Naive thymus-derived CD8-positive, alpha-beta T cell (primary cell): ENCODE measurements at regions of chr11 and their contacts with region 1.

Region 1: DNA sequence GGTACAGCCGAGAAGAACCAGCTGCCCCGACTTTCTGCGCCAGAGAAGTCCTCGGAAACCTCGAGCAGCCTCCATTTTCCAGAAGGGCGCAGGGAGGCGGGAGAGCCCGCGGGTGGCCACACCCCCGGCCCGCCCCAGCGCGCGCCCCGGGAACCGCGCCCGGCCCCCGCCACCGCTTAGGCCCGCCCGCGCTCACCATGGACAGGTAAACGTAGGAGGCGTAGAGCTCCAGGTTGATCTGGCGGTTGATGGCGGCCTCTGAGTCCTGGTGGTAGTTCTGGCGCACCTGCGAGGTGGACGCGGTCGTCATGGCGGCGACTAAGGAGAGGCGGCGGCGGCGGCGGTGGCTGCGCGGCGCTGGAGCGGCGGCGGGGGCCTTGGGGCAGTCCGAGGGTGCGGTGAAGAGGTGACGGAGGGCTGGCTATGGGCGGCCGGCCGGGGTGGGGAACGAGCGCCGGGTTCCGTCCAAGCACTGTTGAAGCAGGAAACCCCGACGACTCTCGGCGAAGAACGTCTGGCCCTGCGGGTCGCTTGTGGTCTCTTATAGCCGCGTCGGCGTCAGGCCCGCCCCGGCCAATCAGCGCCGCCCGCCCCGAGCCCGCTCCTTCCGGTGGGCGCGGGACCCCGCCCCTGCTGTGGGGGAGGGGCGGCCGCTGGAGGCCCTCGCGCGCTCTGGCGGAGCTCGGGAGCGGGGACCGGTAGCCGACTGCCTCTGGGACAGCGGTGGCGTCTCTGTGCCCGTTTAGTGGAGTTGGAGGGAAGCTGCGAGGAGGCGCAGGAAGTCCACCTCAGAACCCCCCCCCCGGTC is at the start of gene FTH1:
- DNase-seq: peak; percentile 84 to 95 (median 90)
- ATAC-seq: peak; percentile 75 to 76
- H3K4me3 Mint-ChIP-seq: peak within 1 kb of the TSS; percentile 89 to 98 (median 95)
- H3K27ac Mint-ChIP-seq: peak within 1 kb of the TSS; percentile 84 to 99 (median 98)
- H3K4me1 Mint-ChIP-seq: peaks cover 39 to 76% (median 64%) of the 10 kb centered on the region in 4 donors
- H3K27me3 Mint-ChIP-seq: no peaks in the 10 kb centered on the region
- polyA plus RNA-seq, gene FTH1: 1,933 to 2,491 (median 2,221) TPM

Region 2: DNA sequence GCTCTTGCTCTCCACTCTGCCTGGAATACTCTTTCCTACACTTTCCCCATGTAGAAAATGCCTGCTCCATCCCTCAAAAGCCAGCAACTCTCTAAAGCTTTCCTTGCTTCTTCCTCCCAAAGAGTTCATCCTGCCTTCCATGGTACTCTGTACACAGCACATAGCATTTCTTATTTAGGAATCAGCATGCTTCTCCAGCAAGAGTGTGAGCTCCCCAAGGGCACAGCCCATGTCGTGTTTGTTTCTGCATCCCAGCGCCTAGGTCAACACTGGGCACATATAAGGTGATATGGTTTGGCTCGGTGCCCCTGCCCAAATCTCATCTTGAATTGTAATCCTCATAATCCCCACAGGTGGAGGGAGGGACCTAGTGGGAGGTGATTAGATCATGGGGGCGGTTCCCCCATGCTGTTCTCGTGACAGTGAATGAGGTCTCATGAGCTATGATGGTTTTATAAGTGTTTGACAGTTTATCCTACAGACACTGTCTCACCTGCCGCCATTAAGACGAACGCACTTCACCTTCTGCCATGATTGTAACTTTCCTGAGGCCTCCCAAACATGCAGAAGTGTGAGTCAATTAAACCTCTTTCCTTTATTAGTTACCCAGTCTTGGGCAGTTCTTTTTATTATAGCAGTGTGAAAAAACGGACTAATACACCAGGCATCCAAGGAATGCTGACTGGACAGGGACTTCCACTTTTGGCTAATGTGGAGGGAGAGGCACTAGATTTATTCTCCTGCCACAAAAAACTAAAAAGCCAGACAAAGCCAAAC is 814.3 kb before region 1 on chr11:
- POLR2A ChIA-PET with region 1: no interaction called
- DNase-seq: no peak
- ATAC-seq: no peak
- H3K4me3 Mint-ChIP-seq: no peak overlapping the region
- H3K27ac Mint-ChIP-seq: no peak overlapping the region
- H3K4me1 Mint-ChIP-seq: peaks cover 14 to 27% (median 22%) of the 10 kb centered on the region in 4 donors
- H3K27me3 Mint-ChIP-seq: no peaks in the 10 kb centered on the region

Region 3: DNA sequence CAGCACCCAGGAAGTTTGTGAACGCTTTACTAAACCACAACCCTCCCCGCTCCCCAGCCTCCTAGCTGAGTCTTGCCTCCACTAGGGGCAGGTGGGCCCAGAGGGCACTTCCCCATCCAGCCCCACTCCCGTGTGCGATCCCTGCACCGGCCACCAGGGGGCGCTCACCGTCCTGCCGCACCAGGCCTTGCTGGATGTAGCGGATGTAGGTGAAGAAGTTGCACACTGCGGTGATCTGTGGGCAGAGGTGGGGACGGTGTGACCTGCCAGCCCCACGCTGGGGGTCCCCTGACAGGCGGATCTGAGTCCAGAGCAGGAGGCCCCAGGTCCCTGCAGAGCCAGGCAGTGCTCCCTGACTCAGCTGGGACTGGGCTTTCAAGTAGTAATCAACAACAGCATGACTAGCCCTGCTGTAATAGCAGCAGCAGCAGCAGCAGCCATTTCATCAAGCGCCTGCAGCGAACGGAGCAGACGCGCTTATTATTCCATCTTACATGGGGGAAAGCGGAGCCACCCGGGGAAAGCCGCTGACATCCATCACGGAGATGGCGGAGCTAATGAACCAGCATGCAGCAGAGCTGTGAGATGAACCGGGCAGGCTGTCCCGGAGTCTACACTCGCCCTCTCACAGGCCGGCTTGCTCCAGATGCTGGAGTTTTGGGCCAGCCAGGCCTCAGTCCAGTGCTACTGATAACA is 68.0 kb before region 1 on chr11:
- POLR2A ChIA-PET with region 1: interaction called, 10 read pairs
- DNase-seq: peak; percentile 84 to 97 (median 93)
- ATAC-seq: peak; percentile 95 to 96
- H3K4me3 Mint-ChIP-seq: peak overlapping the region in 1 of 10 donors; percentile 22
- H3K27ac Mint-ChIP-seq: peak overlapping the region; percentile 6 to 94 (median 70)
- H3K4me1 Mint-ChIP-seq: peaks cover 4 to 11% (median 6%) of the 10 kb centered on the region in 4 donors
- H3K27me3 Mint-ChIP-seq: peaks cover 0 to 13% (median 4%) of the 10 kb centered on the region in 5 donors

Region 4: GRCh38 chr11:61947486-61948210 is 19.7 kb before region 1 on chr11:
- POLR2A ChIA-PET with region 1: interaction called, 13 read pairs
- DNase-seq: peak in 9 of 10 donors; percentile 35 to 75 (median 56)
- ATAC-seq: peak; percentile 78 to 89
- H3K4me3 Mint-ChIP-seq: no peak overlapping the region
- H3K27ac Mint-ChIP-seq: peak overlapping the region in 4 of 10 donors; percentile 16 to 62 (median 36)
- H3K4me1 Mint-ChIP-seq: peaks cover 0 to 4% (median 0%) of the 10 kb centered on the region in 4 donors
- H3K27me3 Mint-ChIP-seq: peaks cover 0 to 11% (median 4%) of the 10 kb centered on the region in 5 donors

Region 5: DNA sequence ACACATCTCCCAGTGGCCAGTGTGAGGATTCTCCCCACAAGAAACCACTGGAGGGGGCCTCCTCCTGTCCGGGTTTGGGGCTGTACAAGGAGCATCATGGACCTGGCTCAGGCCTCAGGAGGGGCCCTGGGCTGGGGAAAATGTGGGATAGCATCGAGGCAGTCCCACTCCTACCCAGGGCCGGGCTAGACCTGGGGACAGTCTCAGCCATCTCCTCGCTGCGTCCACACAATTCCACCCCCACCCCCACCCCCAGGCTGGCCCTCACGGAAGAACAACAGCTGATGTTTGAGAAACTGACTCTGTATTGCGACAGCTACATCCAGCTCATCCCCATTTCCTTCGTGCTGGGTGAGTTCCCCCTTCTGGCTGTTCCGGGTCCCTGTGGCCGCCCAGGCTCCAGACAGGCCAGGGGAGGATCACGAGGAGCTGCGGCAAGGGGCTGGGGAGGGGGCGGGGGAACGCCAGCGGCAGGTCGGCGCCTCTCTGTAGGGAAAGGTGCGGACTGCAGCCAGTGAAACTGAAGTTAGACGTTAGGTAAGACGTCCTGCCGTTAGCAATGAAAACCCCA is 12.4 kb before region 1 on chr11:
- POLR2A ChIA-PET with region 1: interaction called, 11 read pairs
- DNase-seq: peak in 2 of 10 donors; percentile 15 to 18
- ATAC-seq: peak; percentile 30 to 44
- H3K4me3 Mint-ChIP-seq: peak overlapping the region in 8 of 10 donors; percentile 10 to 71 (median 61)
- H3K27ac Mint-ChIP-seq: peak overlapping the region in 4 of 10 donors; percentile 19 to 71 (median 44)
- H3K4me1 Mint-ChIP-seq: peaks cover 0 to 10% (median 7%) of the 10 kb centered on the region in 4 donors
- H3K27me3 Mint-ChIP-seq: peaks cover 3 to 29% (median 11%) of the 10 kb centered on the region in 5 donors

Region 6: GRCh38 chr11:62004473-62004872 is 37.2 kb after region 1 on chr11:
- POLR2A ChIA-PET with region 1: no interaction called
- DNase-seq: no peak
- ATAC-seq: no peak
- H3K4me3 Mint-ChIP-seq: no peak overlapping the region
- H3K27ac Mint-ChIP-seq: peak overlapping the region in 1 of 10 donors; percentile 65
- H3K4me1 Mint-ChIP-seq: no peaks in the 10 kb centered on the region
- H3K27me3 Mint-ChIP-seq: peaks cover 0 to 4% (median 2%) of the 10 kb centered on the region in 5 donors

Region 7: DNA sequence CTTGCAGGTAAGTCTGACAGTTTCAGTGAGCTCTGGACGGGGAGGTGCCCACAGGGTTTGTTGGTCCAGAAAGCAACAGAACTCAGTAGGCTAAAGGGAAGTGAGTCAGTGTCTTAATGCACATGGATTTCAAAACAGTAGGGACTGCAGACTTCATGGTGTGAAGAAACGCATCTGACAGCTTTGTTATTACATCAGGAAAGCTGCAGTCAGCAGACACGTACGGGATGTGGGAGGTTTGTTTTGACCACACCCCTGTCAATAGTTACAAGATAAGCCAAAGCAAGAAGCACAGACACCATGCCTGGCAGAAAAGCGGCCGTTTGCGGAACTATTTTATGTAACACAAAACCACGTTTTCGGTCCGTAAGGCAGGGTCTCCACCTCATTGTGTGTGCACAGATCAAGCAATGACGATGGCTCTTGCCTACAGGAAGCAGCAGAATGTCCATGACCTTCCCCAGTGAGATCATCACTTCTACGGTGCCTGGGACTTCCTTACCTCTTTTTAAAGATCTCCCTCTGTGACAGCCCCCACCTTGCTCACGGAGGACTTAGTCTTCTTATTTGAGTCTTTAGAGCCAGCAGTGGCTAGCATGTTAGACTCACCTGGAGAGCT is 58.3 kb after region 1 on chr11:
- POLR2A ChIA-PET with region 1: interaction called, 46 read pairs
- DNase-seq: peak; percentile 57 to 94 (median 88)
- ATAC-seq: peak; percentile 85 to 90
- H3K4me3 Mint-ChIP-seq: peak overlapping the region; percentile 56 to 81 (median 75)
- H3K27ac Mint-ChIP-seq: peak overlapping the region; percentile 92 to 99 (median 98)
- H3K4me1 Mint-ChIP-seq: peaks cover 6 to 30% (median 17%) of the 10 kb centered on the region in 4 donors
- H3K27me3 Mint-ChIP-seq: peaks cover 0 to 3% (median 0%) of the 10 kb centered on the region in 5 donors

Region 8: DNA sequence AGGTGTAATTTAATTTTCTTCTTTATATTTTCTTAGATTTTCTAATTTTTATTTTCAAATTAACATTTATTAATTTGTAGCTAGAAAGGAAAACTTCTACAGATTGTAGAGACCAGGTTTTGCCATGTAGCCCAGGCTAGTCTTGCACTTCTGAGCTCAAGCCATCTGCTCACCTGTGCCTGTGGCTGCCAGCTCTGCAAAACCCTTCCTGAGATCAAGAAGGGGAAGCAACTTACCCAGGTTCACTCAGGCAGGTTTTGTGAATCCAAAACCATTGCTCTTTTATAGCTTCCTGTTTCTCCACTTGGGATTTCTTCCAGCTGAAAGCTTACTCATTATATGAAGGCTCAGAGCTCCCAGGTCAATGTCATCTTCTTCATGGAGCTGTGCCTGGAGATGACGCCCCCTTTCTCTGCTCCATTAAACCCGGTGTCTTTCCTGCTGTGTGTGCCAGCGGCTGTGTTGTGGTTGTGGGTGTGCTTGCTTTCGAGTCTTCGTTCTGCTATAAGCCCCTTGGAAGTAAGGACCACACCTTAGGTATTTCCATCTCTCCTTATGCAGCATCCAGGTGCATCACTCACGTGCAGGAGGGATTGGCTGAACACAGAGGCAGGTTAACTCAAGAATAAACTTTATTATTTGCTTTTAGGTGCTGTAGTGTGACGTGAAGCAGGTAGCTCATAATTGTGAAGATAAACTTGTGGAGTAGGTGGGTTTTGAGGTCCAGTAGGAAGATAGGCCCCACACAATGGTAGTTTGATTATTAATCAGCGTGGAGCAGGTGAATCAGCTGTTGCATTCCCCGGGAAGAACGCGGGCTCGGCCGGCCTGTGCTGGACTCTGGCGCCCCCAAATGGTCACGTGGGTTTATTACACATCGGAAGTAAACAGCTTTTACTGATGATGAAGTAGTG is 114.3 kb after region 1 on chr11:
- POLR2A ChIA-PET with region 1: interaction called, 32 read pairs
- DNase-seq: peak; percentile 63 to 87 (median 78)
- ATAC-seq: peak; percentile 84 to 85
- H3K4me3 Mint-ChIP-seq: peak overlapping the region in 9 of 10 donors; percentile 1 to 68 (median 40)
- H3K27ac Mint-ChIP-seq: peak overlapping the region in 9 of 10 donors; percentile 11 to 93 (median 83)
- H3K4me1 Mint-ChIP-seq: peaks cover 5 to 8% (median 7%) of the 10 kb centered on the region in 4 donors
- H3K27me3 Mint-ChIP-seq: peaks cover 0 to 2% (median 0%) of the 10 kb centered on the region in 5 donors

Region 9: GRCh38 chr11:62123669-62124185 is 156.4 kb after region 1 on chr11 and contains the start of gene INCENP:
- POLR2A ChIA-PET with region 1: interaction called, 13 read pairs
- DNase-seq: peak; percentile 87 to 97 (median 94)
- ATAC-seq: peak; percentile 99
- H3K4me3 Mint-ChIP-seq: peak within 1 kb of the TSS; percentile 89 to 96 (median 94)
- H3K27ac Mint-ChIP-seq: peak within 1 kb of the TSS; percentile 66 to 94 (median 92)
- H3K4me1 Mint-ChIP-seq: peaks cover 13 to 30% (median 28%) of the 10 kb centered on the region in 4 donors
- H3K27me3 Mint-ChIP-seq: no peaks in the 10 kb centered on the region
- polyA plus RNA-seq, gene INCENP: 0.73 to 1.8 (median 1.3) TPM

Region 10: DNA sequence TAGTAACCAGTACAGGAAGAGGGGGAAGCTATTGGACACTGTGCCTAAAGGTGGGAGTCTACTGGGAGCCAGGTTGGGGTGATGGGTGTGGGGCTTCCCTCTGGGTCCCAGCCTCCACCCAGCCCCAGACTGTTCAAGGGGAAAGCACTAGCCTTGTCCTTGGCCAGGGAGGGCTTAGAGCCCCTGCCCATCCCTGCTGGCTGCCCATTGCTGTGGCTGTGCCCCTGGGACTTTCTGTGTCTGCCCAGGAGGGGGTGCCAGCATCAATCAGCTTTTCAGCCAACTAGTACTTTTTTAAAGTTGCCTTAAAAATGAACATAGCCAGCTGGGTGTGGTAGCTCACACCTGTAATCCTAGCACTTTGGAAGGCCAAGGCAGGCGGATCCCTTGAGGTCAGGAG is 176.4 kb after region 1 on chr11:
- POLR2A ChIA-PET with region 1: no interaction called
- DNase-seq: no peak
- ATAC-seq: no peak
- H3K4me3 Mint-ChIP-seq: no peak overlapping the region
- H3K27ac Mint-ChIP-seq: peak overlapping the region in 1 of 10 donors; percentile 12
- H3K4me1 Mint-ChIP-seq: no peaks in the 10 kb centered on the region
- H3K27me3 Mint-ChIP-seq: no peaks in the 10 kb centered on the region